ENCODE measurements at regions of chr7 and their contacts with region 1.

Region 1: DNA sequence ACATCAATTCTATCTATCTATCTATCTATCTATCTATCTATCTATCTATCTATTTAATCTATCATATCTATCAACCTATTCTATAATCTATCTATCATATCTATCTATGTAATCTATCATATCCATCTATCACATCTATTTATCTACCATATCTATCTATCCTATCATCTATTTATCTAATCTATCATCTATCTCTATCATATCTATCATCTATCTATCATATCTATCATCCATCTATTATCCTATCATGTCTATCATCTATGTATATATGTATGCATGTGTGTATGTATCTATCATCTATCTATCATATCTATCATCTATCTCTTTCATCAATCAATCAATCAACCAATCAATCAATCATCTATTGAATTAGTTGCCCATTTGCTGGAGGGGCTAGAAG is 159.3 kb upstream of the GALNT17 start:
- DNase-seq: no peak
- ATAC-seq: no peak
- H3K4me3 ChIP-seq: no peak overlapping the region
- H3K27ac ChIP-seq: no peak overlapping the region
- H3K4me1 ChIP-seq: no peaks in the 10 kb centered on the region
- H3K27me3 ChIP-seq: no peaks in the 10 kb centered on the region
- CTCF ChIP-seq: no peak

Region 2: DNA sequence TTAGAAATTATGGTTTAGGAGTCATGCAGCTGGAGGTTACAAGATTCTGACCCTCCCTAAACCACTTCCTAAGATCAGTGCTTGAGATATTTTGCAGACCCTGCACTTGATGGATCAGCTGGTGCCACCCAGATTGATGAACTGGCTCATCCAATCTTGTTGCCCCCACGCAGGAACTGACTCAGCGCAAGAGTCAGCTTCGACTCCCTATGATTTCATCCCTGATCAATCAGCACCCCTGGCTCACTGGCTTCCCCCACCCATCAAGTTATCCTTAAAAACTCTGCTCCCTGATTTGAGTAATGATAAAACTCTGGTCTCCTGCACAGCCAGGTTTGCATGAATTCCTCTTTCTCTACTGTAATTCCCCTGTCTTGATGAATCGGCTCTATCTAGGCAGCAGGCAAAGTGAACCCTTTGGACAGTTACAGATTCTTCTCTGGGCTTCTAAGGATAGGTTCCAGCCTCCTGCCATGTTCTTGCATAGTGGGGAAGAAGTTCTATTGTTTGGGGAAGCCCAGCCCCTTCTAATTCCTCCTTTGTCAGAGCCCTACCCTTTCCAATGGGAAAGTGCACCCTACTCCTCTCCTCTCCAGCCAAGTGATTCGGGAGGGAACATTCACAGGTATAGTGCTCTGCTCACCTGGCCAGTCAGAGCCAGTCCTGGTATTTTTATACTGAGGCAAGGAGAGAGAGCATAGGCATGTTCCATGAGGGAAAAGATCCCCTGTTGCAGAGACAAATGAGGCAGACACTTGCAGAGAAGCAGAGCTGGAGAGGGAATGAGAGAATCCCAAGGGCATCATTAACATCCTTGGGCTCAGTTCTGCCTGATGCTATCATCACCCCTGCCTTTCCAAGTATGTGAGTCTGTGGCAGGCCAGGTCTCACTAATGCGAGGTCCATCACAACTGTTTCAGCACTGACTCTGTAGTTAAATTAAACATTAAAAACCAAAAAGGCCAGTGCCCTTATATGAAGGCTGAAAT is 65.1 kb before region 1 on chr7:
- intact Hi-C with region 1: loop called in 1 of 3 experiments (anchors 10 kb)
- DNase-seq: no peak
- ATAC-seq: no peak
- H3K4me3 ChIP-seq: no peak overlapping the region
- H3K27ac ChIP-seq: no peak overlapping the region
- H3K4me1 ChIP-seq: no peaks in the 10 kb centered on the region
- H3K27me3 ChIP-seq: no peaks in the 10 kb centered on the region
- CTCF ChIP-seq: no peak

Region 3: DNA sequence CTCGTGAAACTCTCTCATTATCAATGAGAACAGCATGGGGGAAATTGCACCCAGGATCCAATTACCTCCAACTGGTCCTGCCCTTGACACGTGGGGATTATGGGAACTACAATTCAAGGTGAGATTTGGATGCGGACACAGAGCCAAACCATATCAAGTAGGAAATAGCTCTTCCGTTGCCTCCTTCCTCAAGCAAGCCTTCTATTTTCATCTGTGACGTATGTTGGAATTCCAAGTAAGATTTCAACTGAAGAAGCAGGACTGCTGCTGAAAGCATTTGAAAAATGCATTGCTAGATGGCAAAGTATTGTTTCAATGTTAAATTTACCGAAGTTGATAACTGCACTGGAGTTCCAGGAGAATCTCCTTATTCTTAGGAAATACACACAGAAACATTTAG is 18.9 kb before region 1 on chr7:
- intact Hi-C with region 1: loop called in 1 of 3 experiments (anchors 2 kb)
- DNase-seq: no peak
- ATAC-seq: no peak
- H3K4me3 ChIP-seq: no peak overlapping the region
- H3K27ac ChIP-seq: no peak overlapping the region
- H3K4me1 ChIP-seq: no peaks in the 10 kb centered on the region
- H3K27me3 ChIP-seq: no peaks in the 10 kb centered on the region
- CTCF ChIP-seq: no peak

Region 4: GRCh38 chr7:70986297-70986696 is 13.6 kb after region 1 on chr7:
- intact Hi-C with region 1: no loop called
- DNase-seq: no peak
- ATAC-seq: no peak
- H3K4me3 ChIP-seq: no peak overlapping the region
- H3K27ac ChIP-seq: no peak overlapping the region
- H3K4me1 ChIP-seq: no peaks in the 10 kb centered on the region
- H3K27me3 ChIP-seq: no peaks in the 10 kb centered on the region
- CTCF ChIP-seq: no peak

Region 5: DNA sequence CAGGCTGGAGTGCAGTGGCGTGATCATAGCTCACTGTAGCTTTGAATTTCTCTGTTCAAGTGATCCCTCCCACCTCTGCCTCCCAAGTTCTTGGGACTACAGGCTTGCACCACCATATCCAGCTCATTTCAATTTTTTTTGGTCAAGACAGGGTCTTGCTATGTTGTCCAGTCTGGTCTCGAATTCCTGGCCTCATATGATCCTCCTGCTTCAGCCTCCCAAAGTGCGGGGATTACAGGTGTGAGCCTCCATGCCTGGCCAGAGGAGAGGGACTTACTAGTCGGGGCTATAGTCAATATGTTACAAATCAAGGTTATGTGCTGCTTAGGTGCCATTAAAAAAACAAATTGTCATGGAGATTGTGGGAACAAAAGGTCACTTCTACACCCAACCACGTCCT is 54.0 kb after region 1 on chr7:
- intact Hi-C with region 1: no loop called
- DNase-seq: no peak
- ATAC-seq: no peak
- H3K4me3 ChIP-seq: no peak overlapping the region
- H3K27ac ChIP-seq: no peak overlapping the region
- H3K4me1 ChIP-seq: no peaks in the 10 kb centered on the region
- H3K27me3 ChIP-seq: no peaks in the 10 kb centered on the region
- CTCF ChIP-seq: no peak

Region 6: GRCh38 chr7:71237945-71238344 is 265.3 kb after region 1 on chr7:
- intact Hi-C with region 1: no loop called
- DNase-seq: no peak
- ATAC-seq: peak in 2 of 4 donors; percentile 66 to 86
- H3K4me3 ChIP-seq: no peak overlapping the region
- H3K27ac ChIP-seq: no peak overlapping the region
- H3K4me1 ChIP-seq: no peaks in the 10 kb centered on the region
- H3K27me3 ChIP-seq: no peaks in the 10 kb centered on the region
- CTCF ChIP-seq: no peak

Measured in pancreas (tissue), 10 donors.